ENCODE measurements at regions of chr13 and their contacts with region 1.

Region 1: GRCh38 chr13:47437406-47437805 is 540.6 kb upstream of the HTR2A start:
- DNase-seq: no peak
- ATAC-seq: no peak
- H3K4me3 ChIP-seq: no peak overlapping the region
- H3K27ac ChIP-seq: no peak overlapping the region
- H3K4me1 ChIP-seq: no peaks in the 10 kb centered on the region
- H3K27me3 ChIP-seq: no peaks in the 10 kb centered on the region
- CTCF ChIP-seq: no peak

Region 2: DNA sequence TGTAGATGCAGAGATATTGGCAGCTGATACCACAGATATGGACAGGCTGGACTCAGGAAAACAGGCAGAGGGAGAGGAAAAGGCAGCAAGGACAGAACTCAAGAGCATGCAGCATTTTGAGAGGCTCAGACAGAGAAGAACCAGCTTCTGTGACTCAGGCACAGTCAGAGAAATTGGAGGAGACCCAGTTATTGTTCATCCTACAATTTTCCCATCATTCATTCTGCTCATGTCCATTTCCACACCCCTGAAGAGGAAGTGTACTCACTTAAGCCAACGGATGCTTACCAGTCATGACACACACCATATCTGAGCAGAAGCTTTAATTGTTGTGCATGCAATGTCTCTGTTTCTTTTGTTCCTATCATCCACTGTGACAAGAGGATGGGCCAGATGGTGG is 180.8 kb before region 1 on chr13:
- CTCF ChIA-PET with region 1: no interaction called
- POLR2A ChIA-PET with region 1: no interaction called
- intact Hi-C with region 1: no loop called
- DNase-seq: peak; percentile 89
- ATAC-seq: peak; percentile 97
- H3K4me3 ChIP-seq: no peak overlapping the region
- H3K27ac ChIP-seq: peak overlapping the region; percentile 86
- H3K4me1 ChIP-seq: peaks cover 15% of the 10 kb centered on the region
- H3K27me3 ChIP-seq: no peaks in the 10 kb centered on the region
- CTCF ChIP-seq: no peak

Region 3: DNA sequence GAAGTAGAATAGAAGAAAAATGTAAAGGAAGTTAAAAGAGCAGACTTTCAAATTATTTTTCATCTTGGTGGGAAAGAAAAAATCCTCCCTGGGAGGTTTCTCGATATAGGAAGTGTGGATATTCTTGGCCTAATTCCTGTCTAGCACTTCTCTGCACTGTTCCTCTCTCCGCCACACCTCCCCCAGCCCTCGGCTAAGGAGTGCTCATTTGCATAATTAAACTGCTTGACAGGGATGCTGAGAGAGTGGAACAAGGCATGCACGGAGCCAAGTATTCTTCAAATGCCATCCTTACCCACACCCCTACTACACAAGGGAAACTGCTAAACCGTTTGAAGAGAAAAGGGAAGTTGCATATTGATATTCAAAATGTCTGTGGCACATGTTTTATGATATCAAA is 29.6 kb before region 1 on chr13:
- CTCF ChIA-PET with region 1: no interaction called
- POLR2A ChIA-PET with region 1: no interaction called
- intact Hi-C with region 1: loop called (anchors 2 kb)
- DNase-seq: no peak
- ATAC-seq: no peak
- H3K4me3 ChIP-seq: no peak overlapping the region
- H3K27ac ChIP-seq: peak overlapping the region; percentile 86
- H3K4me1 ChIP-seq: peaks cover 33% of the 10 kb centered on the region
- H3K27me3 ChIP-seq: no peaks in the 10 kb centered on the region
- CTCF ChIP-seq: no peak